CD14-positive monocyte (primary cell): ENCODE measurements at regions of chr1 and their contacts with region 1.

Region 1: GRCh38 chr1:94792473-94793295 is 27.5 kb upstream of the SLC44A3 start:
- DNase-seq: peak; percentile 75 to 95 (median 88)
- H3K4me3 ChIP-seq: peak overlapping the region in 1 of 3 experiments; percentile 2
- H3K4me3 Mint-ChIP-seq: peak overlapping the region in 1 of 2 donors; percentile 42
- H3K27ac ChIP-seq: peak overlapping the region in 1 of 2 donors; percentile 69
- H3K27ac Mint-ChIP-seq: peak overlapping the region; percentile 73 to 90 (median 81)
- H3K4me1 ChIP-seq: peaks cover 50 to 55% of the 10 kb centered on the region in 2 donors
- H3K4me1 Mint-ChIP-seq: peaks cover 51% of the 10 kb centered on the region
- H3K27me3 ChIP-seq: no peaks in the 10 kb centered on the region
- H3K27me3 Mint-ChIP-seq: peaks cover 0 to 2% (median 0%) of the 10 kb centered on the region in 3 donors
- CTCF ChIP-seq: peak; percentile 60

Region 2: DNA sequence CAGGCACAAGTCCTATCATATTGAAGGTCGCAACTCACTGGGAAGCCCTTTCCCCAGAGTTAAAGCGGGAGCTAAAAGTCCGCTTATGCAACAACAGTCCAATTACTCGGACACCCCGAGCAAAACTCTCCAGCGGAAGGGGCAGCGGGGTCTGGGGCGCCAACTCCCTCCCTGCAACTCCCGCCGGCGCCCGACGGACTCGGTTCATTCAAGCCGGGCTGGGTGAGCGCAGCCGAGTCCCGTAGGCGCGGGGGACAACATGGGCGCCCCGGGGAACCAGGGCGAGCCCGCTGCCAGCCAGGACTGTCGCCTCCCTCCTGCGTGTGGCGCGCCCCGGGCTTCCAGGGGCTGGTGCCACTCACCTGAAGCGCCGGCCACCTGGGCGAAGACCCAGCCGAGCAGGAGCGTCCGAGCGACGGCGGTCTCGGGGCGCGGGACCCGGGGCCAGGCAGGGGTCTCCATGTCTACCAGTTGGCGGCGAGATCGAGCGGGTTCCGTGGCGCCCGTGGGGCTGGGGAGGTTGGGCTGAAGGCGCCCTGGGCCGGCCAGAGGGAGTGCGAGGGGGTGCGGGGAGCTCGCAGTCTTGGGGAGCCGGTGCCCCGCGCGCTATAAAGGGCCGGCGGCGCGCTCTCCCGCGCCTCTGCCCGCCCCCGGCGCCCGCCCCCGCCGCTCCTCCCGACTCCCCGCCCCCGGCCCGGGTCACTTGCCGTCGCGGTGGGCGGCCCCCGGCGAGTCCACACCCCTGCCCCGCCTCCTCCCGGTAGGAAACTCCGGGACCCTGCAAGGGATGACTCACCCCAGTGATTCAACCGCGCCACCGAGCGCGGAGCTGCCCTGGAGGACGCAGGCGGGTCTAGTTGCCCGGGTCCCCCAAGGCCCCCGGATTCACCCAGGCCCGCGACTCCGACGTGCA is 251.3 kb before region 1 on chr1 and contains the start of gene F3:
- intact Hi-C with region 1: loop called in 1 of 2 experiments (anchors 5 kb)
- DNase-seq: peak; percentile 82 to 96 (median 88)
- H3K4me3 ChIP-seq: peak within 1 kb of the TSS; percentile 72 to 89 (median 83)
- H3K4me3 Mint-ChIP-seq: peak within 1 kb of the TSS; percentile 90 to 95
- H3K27ac ChIP-seq: peak within 1 kb of the TSS in 1 of 2 donors; percentile 81
- H3K27ac Mint-ChIP-seq: peak within 1 kb of the TSS; percentile 80 to 95 (median 92)
- H3K4me1 ChIP-seq: peaks cover 23 to 37% of the 10 kb centered on the region in 2 donors
- H3K4me1 Mint-ChIP-seq: peaks cover 41% of the 10 kb centered on the region
- H3K27me3 ChIP-seq: peaks cover 3 to 7% of the 10 kb centered on the region in 2 donors
- H3K27me3 Mint-ChIP-seq: peaks cover 0 to 13% (median 5%) of the 10 kb centered on the region in 3 donors
- CTCF ChIP-seq: no peak
- polyA plus RNA-seq, gene F3: 0.29 to 3.7 (median 0.77) TPM

Region 3: DNA sequence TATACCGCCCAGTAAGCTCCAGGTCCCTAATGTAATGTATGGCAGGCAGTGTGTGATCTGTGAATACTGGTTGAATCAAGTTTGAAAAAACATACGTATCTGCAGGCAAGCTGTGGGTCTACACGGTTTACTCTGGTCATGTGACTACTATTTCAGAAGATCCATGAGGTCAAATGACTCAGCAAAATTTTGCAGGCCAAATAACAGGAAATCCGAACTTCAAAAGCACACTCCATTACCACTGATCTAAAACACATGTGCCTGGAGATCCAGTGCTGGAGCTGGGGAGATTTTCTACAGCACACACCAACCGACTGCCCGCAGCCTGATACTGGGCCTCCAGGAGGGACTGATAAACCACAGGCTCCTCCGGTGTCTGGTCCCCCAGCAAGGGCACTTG is 37.0 kb before region 1 on chr1:
- intact Hi-C with region 1: loop called in 1 of 2 experiments (anchors 5 kb)
- DNase-seq: peak; percentile 78 to 88 (median 82)
- H3K4me3 ChIP-seq: no peak overlapping the region
- H3K4me3 Mint-ChIP-seq: peak overlapping the region in 1 of 2 donors; percentile 42
- H3K27ac ChIP-seq: peak overlapping the region in 1 of 2 donors; percentile 42
- H3K27ac Mint-ChIP-seq: peak overlapping the region; percentile 62 to 89 (median 72)
- H3K4me1 ChIP-seq: peaks cover 20 to 22% of the 10 kb centered on the region in 2 donors
- H3K4me1 Mint-ChIP-seq: peaks cover 21% of the 10 kb centered on the region
- H3K27me3 ChIP-seq: no peaks in the 10 kb centered on the region
- H3K27me3 Mint-ChIP-seq: peaks cover 0 to 1% (median 0%) of the 10 kb centered on the region in 3 donors
- CTCF ChIP-seq: no peak

Region 4: DNA sequence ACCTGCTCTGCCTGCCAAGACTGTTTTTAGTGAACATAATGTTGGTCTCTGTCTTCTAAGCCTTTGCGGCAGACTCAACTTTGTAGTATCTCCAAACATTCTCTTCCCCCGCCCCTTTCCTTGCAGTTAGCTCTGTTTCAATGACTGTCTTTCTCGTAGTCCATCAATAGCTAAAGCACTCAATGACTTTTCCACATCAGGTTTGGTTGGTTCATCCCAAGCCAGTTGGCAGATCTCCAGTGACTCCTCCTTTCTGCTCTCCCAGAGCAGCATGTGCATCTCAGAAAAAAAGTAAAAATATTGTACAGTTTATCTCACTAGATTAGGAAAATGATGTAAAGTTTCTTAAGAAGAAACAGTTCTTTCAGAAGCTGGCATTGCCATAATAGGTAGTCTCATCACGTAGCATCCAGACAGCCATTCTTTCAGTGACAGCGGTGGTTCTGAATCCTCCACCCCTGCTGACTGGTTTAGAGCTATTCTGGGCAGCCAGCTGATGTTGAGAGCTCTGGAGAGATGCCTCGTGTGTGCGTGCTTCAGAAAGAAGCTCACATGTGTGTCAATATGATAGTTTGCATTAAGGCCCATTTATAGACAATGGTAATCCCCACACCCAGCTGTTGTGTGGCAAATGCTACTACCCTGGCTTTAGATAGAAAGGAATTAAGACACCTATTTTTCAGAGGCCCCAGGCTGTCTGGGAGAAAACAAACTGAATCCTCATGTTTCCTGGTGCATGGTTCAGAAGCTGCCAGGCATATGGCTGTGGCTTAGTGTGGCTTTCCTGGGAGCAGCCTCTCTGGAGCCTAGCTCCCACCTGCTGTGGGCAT is 81.1 kb after region 1 on chr1:
- intact Hi-C with region 1: no loop called
- DNase-seq: no peak
- H3K4me3 ChIP-seq: no peak overlapping the region
- H3K4me3 Mint-ChIP-seq: no peak overlapping the region
- H3K27ac ChIP-seq: no peak overlapping the region
- H3K27ac Mint-ChIP-seq: no peak overlapping the region
- H3K4me1 ChIP-seq: no peaks in the 10 kb centered on the region
- H3K4me1 Mint-ChIP-seq: peaks cover 4% of the 10 kb centered on the region
- H3K27me3 ChIP-seq: no peaks in the 10 kb centered on the region
- H3K27me3 Mint-ChIP-seq: peaks cover 6 to 8% (median 7%) of the 10 kb centered on the region in 3 donors
- CTCF ChIP-seq: no peak